ENCODE measurements at regions of chr1 and their contacts with region 1.

Region 1: DNA sequence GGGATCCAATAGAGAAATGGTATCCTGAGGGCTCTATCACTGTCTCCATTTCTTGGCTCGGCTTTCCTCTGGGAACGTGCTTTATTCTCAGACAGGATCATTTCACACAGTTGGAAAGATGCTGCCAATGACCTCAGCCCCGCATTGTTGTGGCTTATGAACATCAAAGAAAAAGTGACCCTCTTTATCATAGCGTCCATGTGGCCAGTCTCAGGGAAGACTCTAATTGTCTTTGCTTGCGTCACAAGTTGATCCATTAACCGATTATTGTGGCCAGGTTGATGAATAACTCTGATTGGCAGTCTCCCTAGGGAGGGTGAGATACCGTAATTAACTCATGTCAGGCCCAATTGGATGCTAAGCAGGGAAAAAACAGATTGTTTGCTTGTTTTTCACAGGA is 10.4 kb upstream of the TMEM9 start:
- DNase-seq: no peak
- ATAC-seq: no peak
- H3K4me3 ChIP-seq: no peak overlapping the region
- H3K4me3 Mint-ChIP-seq: no peak overlapping the region
- H3K27ac ChIP-seq: no peak overlapping the region
- H3K27ac Mint-ChIP-seq: no peak overlapping the region
- H3K4me1 ChIP-seq: no peaks in the 10 kb centered on the region
- H3K4me1 Mint-ChIP-seq: no peaks in the 10 kb centered on the region
- H3K27me3 ChIP-seq: no peaks in the 10 kb centered on the region
- H3K27me3 Mint-ChIP-seq: peaks cover 5% of the 10 kb centered on the region
- CTCF ChIP-seq: no peak

Region 2: DNA sequence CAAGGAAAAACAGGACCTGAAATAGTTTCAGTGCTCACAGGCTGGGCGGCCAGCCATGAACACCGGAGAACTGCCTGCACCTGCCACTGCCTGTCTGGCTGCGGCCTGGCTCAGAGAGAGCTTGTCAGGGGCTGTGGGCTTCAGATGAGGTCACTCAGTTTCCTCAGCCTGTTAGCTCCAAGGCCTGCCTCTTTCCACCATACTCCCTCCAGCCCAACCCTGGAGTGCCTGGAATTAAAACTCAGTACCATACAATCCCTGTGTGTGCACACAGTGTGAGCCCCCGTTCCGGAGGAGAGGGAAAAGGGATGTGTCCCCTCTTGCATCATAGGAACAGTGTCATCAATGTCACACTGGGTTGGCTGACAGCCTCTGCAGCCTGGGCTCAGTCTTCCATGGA is 68.6 kb before region 1 on chr1:
- CTCF ChIA-PET with region 1: no interaction called
- POLR2A ChIA-PET with region 1: no interaction called
- intact Hi-C with region 1: no loop called
- DNase-seq: no peak
- ATAC-seq: no peak
- H3K4me3 ChIP-seq: no peak overlapping the region
- H3K4me3 Mint-ChIP-seq: no peak overlapping the region
- H3K27ac ChIP-seq: no peak overlapping the region
- H3K27ac Mint-ChIP-seq: no peak overlapping the region
- H3K4me1 ChIP-seq: no peaks in the 10 kb centered on the region
- H3K4me1 Mint-ChIP-seq: no peaks in the 10 kb centered on the region
- H3K27me3 ChIP-seq: no peaks in the 10 kb centered on the region
- H3K27me3 Mint-ChIP-seq: peaks cover 4% of the 10 kb centered on the region
- CTCF ChIP-seq: no peak

Region 3: GRCh38 chr1:201191653-201192260 is 27.1 kb after region 1 on chr1:
- CTCF ChIA-PET with region 1: no interaction called
- POLR2A ChIA-PET with region 1: no interaction called
- intact Hi-C with region 1: loop called in 1 of 2 experiments (anchors 2 kb)
- DNase-seq: no peak
- ATAC-seq: no peak
- H3K4me3 ChIP-seq: no peak overlapping the region
- H3K4me3 Mint-ChIP-seq: no peak overlapping the region
- H3K27ac ChIP-seq: no peak overlapping the region
- H3K27ac Mint-ChIP-seq: no peak overlapping the region
- H3K4me1 ChIP-seq: no peaks in the 10 kb centered on the region
- H3K4me1 Mint-ChIP-seq: no peaks in the 10 kb centered on the region
- H3K27me3 ChIP-seq: no peaks in the 10 kb centered on the region
- H3K27me3 Mint-ChIP-seq: peaks cover 20% of the 10 kb centered on the region
- CTCF ChIP-seq: no peak

Measured in CD8-positive, alpha-beta T cell (primary cell).